Activated CD4-positive, alpha-beta memory T cell treated with anti-CD3 and anti-CD28 coated beads for 36 hours (primary cell): ENCODE measurements at regions of chr16 and their contacts with region 1.

Region 1: GRCh38 chr16:24499193-24499814 is 40.1 kb upstream of the RBBP6 start:
- DNase-seq: peak; percentile 43
- H3K4me3 Mint-ChIP-seq: no peak overlapping the region
- H3K27ac Mint-ChIP-seq: no peak overlapping the region
- H3K4me1 Mint-ChIP-seq: no peaks in the 10 kb centered on the region
- H3K27me3 Mint-ChIP-seq: peaks cover 3% of the 10 kb centered on the region

Region 2: GRCh38 chr16:24041826-24042631 is 457.3 kb before region 1 on chr16:
- CTCF ChIA-PET with region 1: interaction called, 56 read pairs
- POLR2A ChIA-PET with region 1: interaction called, 3 read pairs
- intact Hi-C with region 1: loop called (anchors 1 kb)
- DNase-seq: peak; percentile 90
- H3K4me3 Mint-ChIP-seq: no peak overlapping the region
- H3K27ac Mint-ChIP-seq: no peak overlapping the region
- H3K4me1 Mint-ChIP-seq: peaks cover 8% of the 10 kb centered on the region
- H3K27me3 Mint-ChIP-seq: no peaks in the 10 kb centered on the region

Region 3: DNA sequence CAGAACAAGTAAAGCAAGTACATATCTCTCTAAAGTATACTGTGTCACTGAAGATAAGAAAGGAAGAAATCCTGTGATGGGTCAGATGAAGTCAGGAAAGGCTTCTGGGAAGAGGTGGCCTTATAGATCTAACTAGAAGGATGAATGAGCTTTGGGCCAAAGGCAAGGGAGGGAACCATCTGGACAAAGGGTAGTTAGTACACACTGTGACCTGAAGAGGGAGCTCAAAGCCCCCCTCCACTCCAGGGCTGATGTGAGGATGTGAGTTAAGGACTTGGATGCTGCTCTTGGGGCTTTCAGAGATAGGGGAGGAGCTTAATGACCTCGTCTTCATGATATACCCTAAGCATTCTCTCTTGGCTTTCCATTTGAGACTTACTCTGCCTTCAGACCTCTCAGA is 428.5 kb before region 1 on chr16:
- CTCF ChIA-PET with region 1: interaction called, 50 read pairs
- POLR2A ChIA-PET with region 1: no interaction called
- intact Hi-C with region 1: no loop called
- DNase-seq: peak; percentile 66
- H3K4me3 Mint-ChIP-seq: no peak overlapping the region
- H3K27ac Mint-ChIP-seq: no peak overlapping the region
- H3K4me1 Mint-ChIP-seq: peaks cover 39% of the 10 kb centered on the region
- H3K27me3 Mint-ChIP-seq: no peaks in the 10 kb centered on the region

Region 4: GRCh38 chr16:24428756-24429155 is 70.5 kb before region 1 on chr16:
- CTCF ChIA-PET with region 1: no interaction called
- POLR2A ChIA-PET with region 1: no interaction called
- intact Hi-C with region 1: no loop called
- DNase-seq: no peak
- H3K4me3 Mint-ChIP-seq: no peak overlapping the region
- H3K27ac Mint-ChIP-seq: no peak overlapping the region
- H3K4me1 Mint-ChIP-seq: no peaks in the 10 kb centered on the region
- H3K27me3 Mint-ChIP-seq: peaks cover 16% of the 10 kb centered on the region

Region 5: GRCh38 chr16:24670623-24671454 is 171.5 kb after region 1 on chr16:
- CTCF ChIA-PET with region 1: no interaction called
- POLR2A ChIA-PET with region 1: no interaction called
- intact Hi-C with region 1: no loop called
- DNase-seq: peak; percentile 37
- H3K4me3 Mint-ChIP-seq: no peak overlapping the region
- H3K27ac Mint-ChIP-seq: no peak overlapping the region
- H3K4me1 Mint-ChIP-seq: peaks cover 36% of the 10 kb centered on the region
- H3K27me3 Mint-ChIP-seq: peaks cover 5% of the 10 kb centered on the region